H1 (cell line): ENCODE measurements at regions of chr13 and their contacts with region 1.

Region 1: DNA sequence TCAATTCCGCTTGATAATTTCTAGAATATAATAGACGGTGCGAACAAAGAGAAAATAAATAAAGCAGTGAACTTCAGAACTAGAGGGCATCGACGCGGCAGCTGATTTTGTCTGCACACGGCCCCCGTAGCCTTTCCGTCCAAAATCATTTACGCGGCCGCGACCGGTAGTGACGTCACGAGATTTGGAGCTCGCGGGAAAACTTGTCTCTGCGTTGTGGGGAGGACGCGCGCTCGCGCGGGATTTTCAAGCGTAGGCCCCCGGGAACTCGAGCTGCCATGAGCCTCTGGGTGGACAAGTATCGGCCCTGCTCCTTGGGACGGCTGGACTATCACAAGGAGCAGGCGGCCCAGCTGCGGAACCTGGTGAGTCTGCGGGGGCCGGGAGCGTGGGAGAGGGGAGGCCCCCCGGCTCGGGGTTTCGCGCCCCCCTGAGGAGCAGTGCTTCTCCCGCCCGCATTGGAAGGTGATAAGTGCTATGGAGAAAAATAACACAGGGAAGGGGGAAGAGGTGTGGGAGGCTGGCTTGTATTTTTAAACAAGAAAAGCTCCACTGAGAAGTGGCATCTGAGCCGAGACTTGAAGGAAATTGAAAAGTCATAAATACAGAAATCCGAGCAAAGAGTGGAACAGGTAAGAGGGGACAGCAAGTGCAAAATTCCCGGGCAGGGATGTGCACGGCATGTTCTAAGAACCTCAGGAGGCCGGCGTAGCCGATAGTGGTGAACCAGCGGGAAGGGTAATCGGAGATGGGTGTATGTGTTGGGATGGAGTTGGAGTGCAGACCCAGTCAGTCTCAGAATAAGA is at the start of gene RFC3:
- DNase-seq: peak; percentile 69 to 89
- H3K4me3 ChIP-seq: peak within 1 kb of the TSS; percentile 91 to 100 (median 98)
- H3K27ac ChIP-seq: peak within 1 kb of the TSS; percentile 53; the same call in 1 of the 2 replicates
- H3K4me1 ChIP-seq: no peaks in the 10 kb centered on the region; a peak in 1 of 7 replicates
- H3K27me3 ChIP-seq: peaks cover 0 to 1% (median 0%) of the 10 kb centered on the region in 4 experiments; a peak in 2 of 7 replicates
- CTCF ChIP-seq: peak in 1 of 3 experiments; percentile 1; a peak in 1 of 4 replicates
- EP300 ChIP-seq: 0 out of 3 replicates have a peak, but pooled peaks of 1 of the 2 experiments have one; percentile 12
- POLR2A ChIP-seq: peak; percentile 42 to 85
- RAD21 ChIP-seq: no peak; a peak in 1 of 4 replicates
- total RNA-seq, gene RFC3: 42.7 and 45.6 TPM in 2 replicates

Region 2: GRCh38 chr13:33806470-33807248 is 11.4 kb before region 1 on chr13:
- CTCF ChIA-PET with region 1: no interaction called
- POLR2A ChIA-PET with region 1: interaction called, 10 read pairs
- DNase-seq: no peak
- H3K4me3 ChIP-seq: no peak overlapping the region
- H3K27ac ChIP-seq: no peak overlapping the region
- H3K4me1 ChIP-seq: no peaks in the 10 kb centered on the region
- H3K27me3 ChIP-seq: no peaks in the 10 kb centered on the region
- CTCF ChIP-seq: no peak
- EP300 ChIP-seq: no peak
- POLR2A ChIP-seq: no peak
- RAD21 ChIP-seq: no peak

Region 3: DNA sequence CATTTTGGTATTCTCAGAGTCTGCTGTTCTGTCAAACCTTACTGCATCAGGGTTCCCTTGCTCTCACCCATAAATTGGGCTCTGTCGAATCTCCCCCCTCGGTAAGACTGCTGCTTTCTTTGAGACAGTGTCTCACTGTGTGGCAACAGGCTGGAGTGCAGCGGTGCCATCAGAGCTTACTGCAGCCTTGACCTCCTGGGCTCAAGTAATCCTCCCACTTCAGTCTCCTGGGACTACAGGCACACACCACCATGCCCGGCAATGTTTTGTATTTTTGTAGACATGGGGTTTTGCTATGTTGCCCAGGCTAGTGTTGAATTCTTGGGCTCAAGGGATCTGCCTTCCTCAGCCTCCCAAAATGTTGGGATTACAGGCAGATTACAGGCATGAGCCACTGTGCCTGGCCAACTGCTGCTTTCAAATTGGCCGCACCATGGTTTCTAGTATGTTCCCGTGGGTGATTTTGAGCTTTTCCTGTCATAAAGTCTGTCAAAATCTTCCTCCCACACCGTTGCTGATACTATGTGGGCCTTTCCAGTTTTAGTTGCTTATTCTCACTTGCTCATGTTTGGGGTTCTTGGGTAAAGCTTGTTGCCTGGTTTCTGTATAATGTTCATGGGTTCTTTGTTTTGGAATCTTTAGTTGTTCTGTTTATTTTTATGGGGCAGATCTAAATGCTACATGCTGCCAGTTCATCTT is 10.5 kb after region 1 on chr13:
- CTCF ChIA-PET with region 1: interaction called, 3 read pairs
- POLR2A ChIA-PET with region 1: interaction called, 19 read pairs
- DNase-seq: no peak
- H3K4me3 ChIP-seq: no peak overlapping the region
- H3K27ac ChIP-seq: no peak overlapping the region; the same call in 1 of the 2 replicates
- H3K4me1 ChIP-seq: no peaks in the 10 kb centered on the region
- H3K27me3 ChIP-seq: no peaks in the 10 kb centered on the region
- CTCF ChIP-seq: no peak
- EP300 ChIP-seq: no peak
- POLR2A ChIP-seq: no peak
- RAD21 ChIP-seq: no peak